Posterior vena cava (tissue), 2 donors: ENCODE measurements at regions of chr6 and their contacts with region 1.

Region 1: DNA sequence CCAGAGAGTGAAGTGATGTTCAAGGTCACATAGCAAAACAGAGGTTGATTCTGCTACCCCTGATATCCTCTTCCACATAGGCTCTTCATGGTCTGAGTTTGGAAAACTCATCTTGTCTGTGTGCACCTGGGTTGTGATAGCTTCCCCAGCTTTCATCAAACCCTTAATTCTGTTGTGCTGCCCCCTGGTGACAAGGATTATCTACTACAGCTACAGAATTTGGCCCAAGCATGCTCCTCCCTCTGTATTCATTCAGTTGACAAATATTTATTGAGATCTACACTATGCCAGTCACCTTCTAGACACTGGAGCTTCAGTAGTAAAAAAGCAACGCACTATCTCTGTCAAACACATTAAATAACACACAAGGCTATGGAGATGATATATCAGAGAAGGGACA is 50.4 kb downstream of the SMPDL3A start:
- DNase-seq: no peak

Region 2: GRCh38 chr6:122735582-122735981 is 103.9 kb before region 1 on chr6:
- intact Hi-C with region 1: loop called (anchors 5 to 10 kb)
- DNase-seq: no peak

Region 3: GRCh38 chr6:122749451-122750050 is 89.9 kb before region 1 on chr6:
- intact Hi-C with region 1: loop called in 1 of 2 experiments (anchors 10 kb)
- DNase-seq: no peak

Region 4: DNA sequence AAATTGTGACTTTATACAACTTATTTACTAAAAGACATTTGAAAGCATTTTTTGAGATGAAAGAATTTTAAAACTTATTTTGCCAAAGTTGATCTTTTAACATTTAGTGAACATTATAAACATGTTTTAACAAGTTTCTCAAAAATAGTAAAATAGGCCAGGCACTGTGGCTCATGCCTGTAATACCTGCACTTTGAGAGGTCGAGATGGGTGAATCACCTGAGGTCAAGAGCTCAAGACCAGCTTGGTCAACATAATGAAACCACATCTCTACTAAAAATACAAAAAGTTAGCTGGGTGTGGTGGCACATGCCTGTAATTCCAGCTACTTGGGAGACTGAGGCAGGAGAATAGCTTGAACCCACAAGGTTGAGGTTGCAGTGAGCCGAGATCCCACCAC is 235.1 kb after region 1 on chr6:
- intact Hi-C with region 1: no loop called
- DNase-seq: no peak